ENCODE measurements at regions of chr11 and their contacts with region 1.

Region 1: GRCh38 chr11:11841723-11842420 is at the start of gene USP47:
- DNase-seq: peak; percentile 90
- H3K4me3 Mint-ChIP-seq: peak within 1 kb of the TSS; percentile 65
- H3K27ac Mint-ChIP-seq: peak within 1 kb of the TSS; percentile 59
- H3K4me1 Mint-ChIP-seq: peaks cover 1% of the 10 kb centered on the region
- H3K27me3 Mint-ChIP-seq: peaks cover 8% of the 10 kb centered on the region
- total RNA-seq, gene USP47: 52.0 and 54.8 TPM in 2 replicates

Region 2: GRCh38 chr11:10455637-10456487 is 1386.0 kb before region 1 on chr11:
- intact Hi-C with region 1: loop called (anchors 5 kb)
- DNase-seq: peak; percentile 72
- H3K4me3 Mint-ChIP-seq: peak overlapping the region; percentile 86
- H3K27ac Mint-ChIP-seq: peak overlapping the region; percentile 87
- H3K4me1 Mint-ChIP-seq: peaks cover 80% of the 10 kb centered on the region
- H3K27me3 Mint-ChIP-seq: peaks cover 3% of the 10 kb centered on the region

Region 3: GRCh38 chr11:10808553-10809372 is 1033.1 kb before region 1 on chr11 and contains the start of gene EIF4G2:
- intact Hi-C with region 1: loop called (anchors 2 kb)
- DNase-seq: peak; percentile 98
- H3K4me3 Mint-ChIP-seq: peak within 1 kb of the TSS; percentile 95
- H3K27ac Mint-ChIP-seq: peak within 1 kb of the TSS; percentile 98
- H3K4me1 Mint-ChIP-seq: peaks cover 43% of the 10 kb centered on the region
- H3K27me3 Mint-ChIP-seq: no peaks in the 10 kb centered on the region
- total RNA-seq, gene EIF4G2: 1,084 and 1,108 TPM in 2 replicates

Region 4: GRCh38 chr11:11621573-11622319 is 220.1 kb before region 1 on chr11 and contains the start of gene GALNT18:
- intact Hi-C with region 1: loop called (anchors 5 kb)
- DNase-seq: peak; percentile 82
- H3K4me3 Mint-ChIP-seq: peak within 1 kb of the TSS; percentile 87
- H3K27ac Mint-ChIP-seq: no peak within 1 kb of the TSS
- H3K4me1 Mint-ChIP-seq: peaks cover 3% of the 10 kb centered on the region
- H3K27me3 Mint-ChIP-seq: peaks cover 45% of the 10 kb centered on the region
- total RNA-seq, gene GALNT18: 5.3 and 5.7 TPM in 2 replicates

Region 5: DNA sequence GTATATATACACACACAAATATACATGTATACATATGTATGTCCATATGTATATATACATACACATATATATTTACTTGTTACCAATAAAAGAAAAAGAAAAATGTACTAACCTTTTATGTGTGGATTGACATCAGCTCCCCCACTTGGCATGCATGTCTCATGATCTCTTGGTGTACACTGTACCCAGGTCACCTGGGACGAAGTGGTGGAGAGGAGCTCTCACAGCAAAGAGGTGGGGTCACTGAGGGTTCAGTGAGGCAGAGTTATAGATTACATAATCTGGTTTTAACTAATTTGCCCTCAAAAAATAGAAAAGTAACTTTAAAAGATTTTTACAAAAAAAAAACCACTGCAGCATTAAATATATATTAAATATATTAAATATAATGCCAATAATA is 15.6 kb before region 1 on chr11:
- intact Hi-C with region 1: no loop called
- DNase-seq: no peak
- H3K4me3 Mint-ChIP-seq: no peak overlapping the region
- H3K27ac Mint-ChIP-seq: no peak overlapping the region
- H3K4me1 Mint-ChIP-seq: no peaks in the 10 kb centered on the region
- H3K27me3 Mint-ChIP-seq: peaks cover 10% of the 10 kb centered on the region

Region 6: GRCh38 chr11:12149672-12150225 is 307.9 kb after region 1 on chr11:
- intact Hi-C with region 1: loop called (anchors 1 kb)
- DNase-seq: peak; percentile 48
- H3K4me3 Mint-ChIP-seq: peak overlapping the region; percentile 43
- H3K27ac Mint-ChIP-seq: peak overlapping the region; percentile 92
- H3K4me1 Mint-ChIP-seq: peaks cover 85% of the 10 kb centered on the region
- H3K27me3 Mint-ChIP-seq: no peaks in the 10 kb centered on the region

Region 7: DNA sequence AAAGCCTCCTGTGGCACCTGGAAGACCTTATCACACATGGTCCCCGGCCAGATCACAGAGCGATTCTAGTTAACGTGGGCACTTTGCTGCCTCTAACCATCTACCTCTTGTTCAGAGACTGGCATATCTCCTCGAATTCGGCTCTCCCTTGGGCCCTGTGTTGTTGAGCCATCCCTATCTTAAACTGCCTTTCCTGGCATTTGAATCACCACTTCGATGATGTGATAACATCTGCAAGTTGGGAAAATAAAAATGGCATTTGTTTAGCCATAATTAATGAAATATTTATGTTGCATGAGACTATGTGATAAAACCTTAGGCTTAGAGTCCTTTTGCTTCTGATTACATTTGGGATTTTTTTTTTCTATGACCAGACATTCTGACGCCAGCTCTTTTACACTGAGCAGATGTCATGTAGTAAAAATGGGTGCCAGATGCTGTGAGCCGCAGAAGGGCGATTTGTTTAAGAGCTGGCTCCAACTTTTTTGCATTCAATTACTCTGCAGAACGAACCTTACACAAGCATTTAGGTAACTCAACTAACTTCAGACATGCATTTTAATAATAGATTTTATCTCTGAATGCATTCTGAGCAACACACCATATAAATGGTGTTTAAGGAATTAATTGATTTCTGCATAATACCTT is 477.0 kb after region 1 on chr11:
- intact Hi-C with region 1: no loop called
- DNase-seq: no peak
- H3K4me3 Mint-ChIP-seq: no peak overlapping the region
- H3K27ac Mint-ChIP-seq: no peak overlapping the region
- H3K4me1 Mint-ChIP-seq: peaks cover 15% of the 10 kb centered on the region
- H3K27me3 Mint-ChIP-seq: no peaks in the 10 kb centered on the region

Region 8: GRCh38 chr11:12673924-12674570 is 832.2 kb after region 1 on chr11 and contains the start of gene TEAD1:
- intact Hi-C with region 1: loop called (anchors 10 kb)
- DNase-seq: peak; percentile 86
- H3K4me3 Mint-ChIP-seq: peak within 1 kb of the TSS; percentile 82
- H3K27ac Mint-ChIP-seq: peak within 1 kb of the TSS; percentile 47
- H3K4me1 Mint-ChIP-seq: peaks cover 6% of the 10 kb centered on the region
- H3K27me3 Mint-ChIP-seq: peaks cover 52% of the 10 kb centered on the region
- total RNA-seq, gene TEAD1: 0.41 and 1.2 TPM in 2 replicates

Region 9: DNA sequence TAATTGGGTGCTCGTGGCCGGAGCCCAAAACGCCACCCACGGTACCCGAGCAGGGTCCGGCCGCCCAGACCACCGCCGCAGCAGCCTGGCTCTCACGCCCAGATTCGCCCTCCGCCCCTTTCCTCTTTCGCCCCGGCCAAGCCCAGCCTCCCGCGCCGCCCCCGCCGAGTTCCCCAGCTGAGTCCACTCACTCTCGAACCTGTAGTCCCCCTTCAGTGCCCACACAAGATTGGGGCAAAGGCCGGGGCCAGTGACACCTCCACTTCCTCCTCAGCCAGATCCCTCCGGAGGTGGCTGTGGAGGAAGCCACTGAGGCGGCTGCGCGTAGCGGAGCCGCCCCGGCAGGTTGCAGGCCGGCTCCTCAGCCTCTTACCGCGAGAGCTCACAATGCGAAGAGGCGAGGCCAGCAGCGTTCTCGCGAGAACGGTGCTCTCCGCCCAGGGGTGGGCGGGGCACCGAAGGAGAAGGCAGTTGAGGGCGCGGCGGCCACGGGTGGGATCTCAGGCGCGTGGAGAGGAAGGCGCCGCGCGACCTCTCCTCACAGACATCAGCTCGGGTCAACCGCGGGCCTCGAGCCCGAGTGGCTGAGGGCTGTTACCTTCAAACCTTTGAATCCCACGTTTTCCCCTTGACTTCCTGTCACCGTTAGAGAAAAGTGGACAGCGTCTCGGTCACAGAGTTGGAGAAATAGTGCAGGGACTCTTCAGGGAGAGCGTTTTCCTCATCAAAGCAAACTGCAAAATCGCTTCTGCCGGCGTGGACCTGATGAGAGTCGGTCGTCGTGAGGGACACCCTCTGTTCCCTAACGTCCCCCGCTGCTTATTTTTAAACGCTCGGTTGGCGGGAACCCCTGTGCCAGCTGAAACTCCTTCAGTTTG is 1621.3 kb after region 1 on chr11 and contains the start of gene BTBD10:
- intact Hi-C with region 1: loop called (anchors 5 kb)
- DNase-seq: peak; percentile 92
- H3K4me3 Mint-ChIP-seq: peak within 1 kb of the TSS; percentile 99
- H3K27ac Mint-ChIP-seq: peak within 1 kb of the TSS; percentile 98
- H3K4me1 Mint-ChIP-seq: peaks cover 38% of the 10 kb centered on the region
- H3K27me3 Mint-ChIP-seq: peaks cover 3% of the 10 kb centered on the region
- total RNA-seq, gene BTBD10: 21.2 and 21.9 TPM in 2 replicates

Measured in activated T-helper 1 cell treated with anti-CD3 and anti-CD28 coated beads, Interleukin-12 subunit alpha, Interleukin-12 subunit beta, Interleukin-2, Interleukin-4 antibody, amounts not matched to agents 30 ng/mL and 10 ng/mL and 1 ng/mL, durations not matched to agents 14 hours and 24 hours and 36 hours (primary cell).